Psoas muscle (tissue), 8 donors: ENCODE measurements at regions of chr15 and their contacts with region 1.

Region 1: DNA sequence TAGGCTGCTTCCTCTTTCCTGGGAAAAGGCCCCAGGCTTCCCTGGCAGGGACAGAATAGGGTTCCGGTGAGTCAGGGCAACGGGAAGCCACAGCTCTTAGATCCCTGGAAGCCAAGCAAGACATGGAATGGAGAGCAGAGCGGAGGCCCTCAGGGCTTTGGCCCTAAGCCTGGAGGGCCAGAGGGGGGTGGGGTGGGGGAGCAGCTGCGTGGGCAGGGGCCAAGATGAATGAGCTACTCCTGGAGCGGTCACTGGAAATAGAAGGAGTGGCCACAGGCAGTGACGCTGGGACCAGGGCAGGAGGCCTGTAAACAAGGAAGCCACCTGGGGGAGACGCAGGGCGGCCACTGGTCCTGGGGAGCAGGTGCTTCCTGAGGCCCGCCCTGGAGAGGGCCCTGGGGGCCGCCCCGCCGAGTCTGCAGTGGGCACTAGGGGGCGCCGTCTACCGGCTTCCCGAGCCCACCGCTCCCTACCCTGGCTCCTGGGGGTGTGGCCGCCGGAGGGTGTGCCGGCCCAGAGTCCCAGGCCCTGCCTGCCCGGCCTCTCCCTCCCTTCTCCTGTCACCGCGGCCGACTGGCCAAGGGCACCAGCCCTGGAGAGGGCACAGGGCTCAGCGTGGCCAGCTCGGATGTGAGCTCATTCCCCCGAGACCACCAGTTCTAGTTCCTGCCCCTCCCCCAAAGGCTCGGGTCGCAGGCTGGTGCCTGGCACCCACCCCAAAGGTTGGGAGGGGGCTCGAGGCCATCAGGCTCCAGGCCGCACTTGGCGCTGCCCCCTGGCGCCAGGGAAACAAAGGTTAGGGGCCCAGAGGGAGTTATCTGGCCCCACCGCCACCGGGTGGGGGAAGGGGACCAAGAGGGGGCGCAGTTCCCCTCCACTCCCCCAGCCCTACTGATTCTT is 12.1 kb downstream of the VPS18 start:
- DNase-seq: peak; percentile 89 to 94
- ATAC-seq: peak; percentile 80 to 84 (median 82)
- H3K4me3 ChIP-seq: peak overlapping the region; percentile 69
- H3K27ac ChIP-seq: peak overlapping the region; percentile 97
- H3K4me1 ChIP-seq: peaks cover 51% of the 10 kb centered on the region
- H3K27me3 ChIP-seq: no peaks in the 10 kb centered on the region
- CTCF ChIP-seq: peak; percentile 89

Region 2: GRCh38 chr15:40957581-40958051 is 51.3 kb after region 1 on chr15:
- intact Hi-C with region 1: loop called in 1 of 2 experiments (anchors 1 kb)
- DNase-seq: peak; percentile 81 to 94
- ATAC-seq: peak; percentile 57 to 76 (median 61)
- H3K4me3 ChIP-seq: no peak overlapping the region
- H3K27ac ChIP-seq: peak overlapping the region; percentile 86
- H3K4me1 ChIP-seq: peaks cover 40% of the 10 kb centered on the region
- H3K27me3 ChIP-seq: no peaks in the 10 kb centered on the region
- CTCF ChIP-seq: no peak

Region 3: DNA sequence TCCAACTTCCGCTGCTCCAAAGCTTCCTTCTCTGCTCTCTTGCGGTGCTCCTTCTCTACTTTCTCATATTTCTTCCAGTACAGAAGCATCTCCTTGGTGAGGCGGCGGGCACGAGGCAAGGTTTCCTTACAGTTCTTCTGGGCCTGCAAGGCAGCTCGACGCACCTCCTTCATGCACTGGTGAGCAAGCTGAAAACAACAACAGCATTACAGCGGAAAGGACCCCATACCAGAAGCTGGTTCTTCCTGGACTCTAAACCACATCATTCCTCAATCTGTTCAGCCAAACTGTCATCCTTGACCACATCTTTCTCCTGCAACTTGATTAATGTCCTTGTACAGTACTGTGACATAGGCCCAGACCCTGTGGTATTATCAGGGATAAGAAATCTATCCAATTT is 173.4 kb after region 1 on chr15:
- intact Hi-C with region 1: loop called in 1 of 2 experiments (anchors 10 kb)
- DNase-seq: no peak
- ATAC-seq: no peak
- H3K4me3 ChIP-seq: no peak overlapping the region
- H3K27ac ChIP-seq: no peak overlapping the region
- H3K4me1 ChIP-seq: no peaks in the 10 kb centered on the region
- H3K27me3 ChIP-seq: no peaks in the 10 kb centered on the region
- CTCF ChIP-seq: no peak

Region 4: GRCh38 chr15:41180206-41180789 is 274.0 kb after region 1 on chr15:
- intact Hi-C with region 1: loop called in 1 of 2 experiments (anchors 2 kb)
- DNase-seq: no peak
- ATAC-seq: no peak
- H3K4me3 ChIP-seq: no peak overlapping the region
- H3K27ac ChIP-seq: no peak overlapping the region
- H3K4me1 ChIP-seq: no peaks in the 10 kb centered on the region
- H3K27me3 ChIP-seq: no peaks in the 10 kb centered on the region
- CTCF ChIP-seq: no peak